ENCODE measurements at regions of chr1 and their contacts with region 1.

Region 1: DNA sequence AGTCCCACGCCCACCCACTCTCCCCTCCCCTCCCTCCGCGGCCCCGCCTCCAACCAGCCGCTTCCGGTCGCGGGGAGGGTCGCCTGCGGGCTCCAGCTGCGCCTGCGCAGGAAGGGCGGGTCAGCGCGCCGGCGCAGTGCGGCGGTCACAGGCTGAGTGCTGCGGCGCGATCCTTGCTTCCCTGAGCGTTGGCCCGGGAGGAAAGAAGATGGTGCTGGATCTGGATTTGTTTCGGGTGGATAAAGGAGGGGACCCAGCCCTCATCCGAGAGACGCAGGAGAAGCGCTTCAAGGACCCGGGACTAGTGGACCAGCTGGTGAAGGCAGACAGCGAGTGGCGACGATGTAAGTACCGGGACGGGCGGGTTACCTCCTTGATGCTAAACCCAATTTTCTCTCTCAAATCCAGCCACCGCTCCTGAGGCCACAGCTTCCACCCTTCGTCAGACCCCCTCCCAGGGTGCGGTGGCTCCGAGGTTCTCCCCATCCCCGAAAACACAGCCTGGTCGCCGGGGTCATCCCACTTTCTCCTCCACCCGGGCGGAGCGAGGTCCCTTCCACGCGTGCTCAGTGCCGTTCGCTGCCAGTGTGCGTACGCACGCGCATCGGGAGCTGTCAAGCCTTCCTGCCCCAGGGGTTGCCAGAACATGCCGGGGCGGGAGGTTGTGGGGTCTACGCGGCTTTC is at the start of gene SARS1:
- DNase-seq: peak; percentile 89
- ATAC-seq: peak; percentile 91
- H3K4me3 Mint-ChIP-seq: peak within 1 kb of the TSS; percentile 99
- H3K27ac Mint-ChIP-seq: peak within 1 kb of the TSS; percentile 85
- H3K4me1 Mint-ChIP-seq: peaks cover 33% of the 10 kb centered on the region
- H3K27me3 Mint-ChIP-seq: peaks cover 3% of the 10 kb centered on the region
- total RNA-seq, gene SARS1: 145 to 157 TPM

Region 2: GRCh38 chr1:109193653-109194590 is 20.0 kb before region 1 on chr1:
- CTCF ChIA-PET with region 1: interaction called, 17 read pairs
- POLR2A ChIA-PET with region 1: interaction called, 4 read pairs
- DNase-seq: peak; percentile 74
- ATAC-seq: peak; percentile 85
- H3K4me3 Mint-ChIP-seq: no peak overlapping the region
- H3K27ac Mint-ChIP-seq: no peak overlapping the region
- H3K4me1 Mint-ChIP-seq: peaks cover 8% of the 10 kb centered on the region
- H3K27me3 Mint-ChIP-seq: no peaks in the 10 kb centered on the region

Region 3: DNA sequence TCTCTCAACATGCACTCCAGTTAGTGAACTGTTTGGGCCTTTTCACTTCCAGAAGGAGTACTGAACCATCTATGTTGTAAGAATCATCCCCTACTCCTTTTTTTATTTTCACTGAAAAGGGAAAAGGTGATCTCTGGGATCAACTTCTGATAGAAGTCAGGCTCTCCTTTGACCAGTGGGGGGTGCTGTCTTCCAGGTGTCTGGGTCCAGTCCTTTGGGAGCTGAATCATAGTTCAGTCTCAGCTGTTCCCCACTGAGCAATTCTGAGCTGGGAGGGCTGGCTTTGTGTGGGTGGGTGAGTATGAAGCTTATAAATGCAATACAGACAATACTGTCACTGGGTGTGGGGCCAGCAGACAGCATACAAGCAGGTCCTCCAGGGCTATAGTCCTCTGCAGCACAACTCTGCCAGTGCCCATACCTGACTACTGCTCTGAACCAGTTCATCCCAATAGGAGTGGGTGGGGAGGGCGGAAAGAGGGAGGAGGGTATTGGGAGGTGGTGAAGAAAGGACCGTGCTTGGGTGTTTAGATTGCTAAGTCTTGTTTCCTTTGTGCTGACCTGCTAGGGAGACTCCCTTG is 12.7 kb before region 1 on chr1:
- CTCF ChIA-PET with region 1: interaction called, 17 read pairs
- POLR2A ChIA-PET with region 1: interaction called, 6 read pairs
- DNase-seq: peak; percentile 57
- ATAC-seq: no peak
- H3K4me3 Mint-ChIP-seq: no peak overlapping the region
- H3K27ac Mint-ChIP-seq: no peak overlapping the region
- H3K4me1 Mint-ChIP-seq: peaks cover 15% of the 10 kb centered on the region
- H3K27me3 Mint-ChIP-seq: no peaks in the 10 kb centered on the region

Region 4: DNA sequence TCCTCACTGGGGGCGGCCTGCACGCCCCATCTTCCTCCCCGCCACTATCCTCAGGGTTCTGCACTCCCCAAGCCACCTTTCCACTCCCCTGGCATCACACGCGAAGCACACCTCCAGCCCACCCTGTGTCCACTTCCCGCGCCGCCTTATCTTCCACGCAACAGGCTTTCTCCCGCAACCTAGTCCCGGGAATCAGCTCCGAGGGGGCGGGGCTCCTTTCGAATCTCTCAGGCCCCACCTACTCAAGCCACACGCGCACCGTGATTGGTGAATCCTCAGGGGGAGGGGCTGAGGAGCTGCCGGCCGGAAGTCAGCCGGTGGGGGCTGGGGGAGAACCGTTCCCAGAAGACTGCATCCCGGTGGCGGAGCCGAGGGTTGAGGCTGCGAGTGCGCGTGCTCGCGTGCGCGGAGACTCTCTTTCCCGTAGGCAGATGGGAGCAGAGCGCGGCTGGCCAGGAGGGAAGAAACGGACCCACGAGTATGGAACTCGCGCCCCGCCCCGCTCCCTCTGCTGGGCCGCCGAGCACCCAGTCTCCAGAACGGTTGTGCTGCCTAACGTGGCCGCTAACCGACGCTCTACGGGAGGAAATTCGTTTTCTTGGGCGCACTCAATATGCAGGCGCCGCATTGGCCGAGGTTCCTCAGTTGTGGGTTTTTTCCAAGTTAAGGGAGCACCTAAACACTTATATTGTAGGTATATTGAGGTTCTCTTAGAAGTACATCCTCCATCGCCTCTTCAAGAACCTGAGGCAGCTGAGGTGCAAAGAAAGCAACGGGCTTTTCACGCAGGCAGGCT is 69.2 kb after region 1 on chr1 and contains the start of gene PSRC1:
- CTCF ChIA-PET with region 1: interaction called, 10 read pairs
- POLR2A ChIA-PET with region 1: no interaction called
- DNase-seq: peak; percentile 93
- ATAC-seq: peak; percentile 97
- H3K4me3 Mint-ChIP-seq: peak within 1 kb of the TSS; percentile 99
- H3K27ac Mint-ChIP-seq: peak within 1 kb of the TSS; percentile 91
- H3K4me1 Mint-ChIP-seq: peaks cover 31% of the 10 kb centered on the region
- H3K27me3 Mint-ChIP-seq: peaks cover 7% of the 10 kb centered on the region
- total RNA-seq, gene PSRC1: 38.2 to 40.7 TPM

Region 5: DNA sequence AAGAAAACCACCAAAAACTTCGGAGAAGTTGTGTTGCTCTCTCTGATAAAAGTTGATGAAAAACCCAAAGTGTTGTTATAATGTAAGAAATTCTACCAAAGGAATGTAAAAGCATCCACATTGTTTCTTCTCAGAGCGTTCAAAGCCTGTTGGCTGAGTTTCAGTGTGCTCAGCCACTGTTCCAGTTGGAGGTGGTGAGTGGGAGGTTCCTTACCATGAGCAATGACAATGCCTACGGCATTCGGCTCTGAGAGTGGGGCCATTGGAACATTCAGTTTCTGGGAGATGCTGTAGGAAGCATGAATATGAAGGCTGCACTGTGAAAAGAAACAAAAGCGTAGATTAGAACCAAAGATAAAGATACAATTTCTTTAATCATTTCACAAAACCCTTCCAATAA is 113.4 kb after region 1 on chr1:
- CTCF ChIA-PET with region 1: no interaction called
- POLR2A ChIA-PET with region 1: no interaction called
- DNase-seq: no peak
- ATAC-seq: no peak
- H3K4me3 Mint-ChIP-seq: no peak overlapping the region
- H3K27ac Mint-ChIP-seq: no peak overlapping the region
- H3K4me1 Mint-ChIP-seq: no peaks in the 10 kb centered on the region
- H3K27me3 Mint-ChIP-seq: no peaks in the 10 kb centered on the region